ENCODE measurements at regions of chr16 and their contacts with region 1.

Region 1: GRCh38 chr16:72256398-72257054 is 84.6 kb upstream of the PMFBP1 start:
- DNase-seq: no peak
- H3K4me3 ChIP-seq: no peak overlapping the region
- H3K27ac ChIP-seq: no peak overlapping the region
- H3K4me1 ChIP-seq: no peaks in the 10 kb centered on the region
- H3K27me3 ChIP-seq: no peaks in the 10 kb centered on the region
- CTCF ChIP-seq: no peak
- POLR2A ChIP-seq: no peak

Region 2: GRCh38 chr16:70359552-70359951 is 1897.0 kb before region 1 on chr16:
- intact Hi-C with region 1: no loop called
- DNase-seq: no peak
- H3K4me3 ChIP-seq: no peak overlapping the region
- H3K27ac ChIP-seq: no peak overlapping the region
- H3K4me1 ChIP-seq: no peaks in the 10 kb centered on the region
- H3K27me3 ChIP-seq: no peaks in the 10 kb centered on the region
- CTCF ChIP-seq: no peak
- POLR2A ChIP-seq: no peak

Region 3: GRCh38 chr16:72203401-72203800 is 53.1 kb before region 1 on chr16:
- intact Hi-C with region 1: no loop called
- DNase-seq: no peak
- H3K4me3 ChIP-seq: no peak overlapping the region
- H3K27ac ChIP-seq: no peak overlapping the region
- H3K4me1 ChIP-seq: no peaks in the 10 kb centered on the region
- H3K27me3 ChIP-seq: no peaks in the 10 kb centered on the region
- CTCF ChIP-seq: no peak
- POLR2A ChIP-seq: no peak

Region 4: GRCh38 chr16:72221630-72222024 is 34.9 kb before region 1 on chr16:
- intact Hi-C with region 1: no loop called
- DNase-seq: no peak
- H3K4me3 ChIP-seq: no peak overlapping the region
- H3K27ac ChIP-seq: no peak overlapping the region
- H3K4me1 ChIP-seq: no peaks in the 10 kb centered on the region
- H3K27me3 ChIP-seq: no peaks in the 10 kb centered on the region
- CTCF ChIP-seq: no peak
- POLR2A ChIP-seq: no peak

Region 5: GRCh38 chr16:72455743-72456659 is 199.5 kb after region 1 on chr16:
- intact Hi-C with region 1: loop called (anchors 10 kb)
- DNase-seq: no peak
- H3K4me3 ChIP-seq: no peak overlapping the region
- H3K27ac ChIP-seq: no peak overlapping the region
- H3K4me1 ChIP-seq: no peaks in the 10 kb centered on the region
- H3K27me3 ChIP-seq: no peaks in the 10 kb centered on the region
- CTCF ChIP-seq: no peak
- POLR2A ChIP-seq: no peak

Region 6: DNA sequence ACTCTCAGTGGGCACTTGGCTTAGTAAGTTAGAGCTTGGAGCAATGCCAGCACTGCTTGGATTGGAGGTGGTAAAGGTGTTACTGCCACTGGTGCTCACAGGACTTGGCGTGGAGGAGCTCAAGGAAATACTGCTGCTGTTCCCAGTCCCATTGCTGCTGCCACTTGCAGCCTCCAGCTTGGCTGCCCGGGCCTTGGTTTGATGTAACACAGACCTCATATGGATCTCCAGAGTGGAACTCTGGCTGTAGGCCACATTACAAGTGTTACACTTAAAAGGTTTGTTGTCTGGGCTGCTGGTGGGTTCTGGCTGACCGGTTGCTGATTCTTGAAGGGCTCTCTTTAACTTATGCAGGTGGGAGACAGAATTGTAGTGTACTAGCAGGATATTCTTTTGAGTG is 541.1 kb after region 1 on chr16:
- intact Hi-C with region 1: no loop called
- DNase-seq: peak in 1 of 2 donors; percentile 77
- H3K4me3 ChIP-seq: no peak overlapping the region
- H3K27ac ChIP-seq: no peak overlapping the region
- H3K4me1 ChIP-seq: no peaks in the 10 kb centered on the region
- H3K27me3 ChIP-seq: no peaks in the 10 kb centered on the region
- CTCF ChIP-seq: no peak
- POLR2A ChIP-seq: no peak

Measured in vagina (tissue), 2 donors.